WTC11 (cell line): ENCODE measurements at regions of chr4 and their contacts with region 1.

Region 1: GRCh38 chr4:33086331-33086925 is 2366.3 kb downstream of the PCDH7 start:
- DNase-seq: no peak
- ATAC-seq: no peak
- H3K4me3 Mint-ChIP-seq: no peak overlapping the region
- H3K27ac Mint-ChIP-seq: no peak overlapping the region
- H3K4me1 Mint-ChIP-seq: peaks cover 3% of the 10 kb centered on the region; the same call in 1 of the 2 replicates
- H3K27me3 Mint-ChIP-seq: no peaks in the 10 kb centered on the region
- CTCF ChIP-seq: no peak

Region 2: DNA sequence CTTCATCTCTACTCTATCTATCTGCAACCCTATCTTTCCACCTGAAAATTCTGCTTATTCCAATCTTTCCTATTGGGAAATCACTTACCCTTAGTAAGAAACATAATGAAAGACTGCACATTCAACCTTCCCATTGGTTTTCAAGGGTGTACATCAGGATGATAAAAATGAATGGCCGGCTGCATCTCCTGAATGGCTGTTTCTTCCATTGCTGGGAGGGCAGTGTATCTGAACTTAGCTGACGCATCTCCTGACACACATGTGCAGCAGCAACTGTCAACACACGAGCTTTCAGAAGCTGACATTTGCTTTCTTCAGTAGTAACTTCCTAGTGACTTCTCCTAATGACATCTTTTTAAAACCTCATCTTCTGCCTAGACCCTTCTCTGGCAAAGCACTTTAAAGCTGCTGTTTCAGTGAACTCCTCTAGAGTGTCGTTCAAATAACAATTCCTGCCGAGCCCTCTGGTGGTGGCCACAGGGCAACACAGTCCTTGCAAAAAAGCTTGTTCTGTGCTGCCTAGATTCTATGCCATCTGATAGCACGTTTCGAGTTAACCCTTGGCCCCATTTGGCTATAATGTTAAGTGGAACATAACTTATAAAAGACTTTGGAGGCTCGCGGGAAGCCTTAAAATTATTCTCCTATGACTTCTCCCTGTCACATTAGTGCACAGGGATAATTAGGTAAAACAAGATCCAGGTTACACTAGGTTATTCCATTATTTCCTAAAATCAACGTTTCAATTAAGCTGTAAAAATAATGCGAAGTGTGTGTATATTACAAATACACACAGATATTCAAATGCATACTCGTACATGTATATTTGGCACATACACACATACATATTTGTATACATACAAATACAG is 25.5 kb before region 1 on chr4:
- CTCF ChIA-PET with region 1: interaction called, 10 read pairs
- POLR2A ChIA-PET with region 1: no interaction called
- DNase-seq: peak; percentile 66
- ATAC-seq: peak; percentile 100
- H3K4me3 Mint-ChIP-seq: no peak overlapping the region
- H3K27ac Mint-ChIP-seq: no peak overlapping the region
- H3K4me1 Mint-ChIP-seq: peaks cover 16% of the 10 kb centered on the region
- H3K27me3 Mint-ChIP-seq: no peaks in the 10 kb centered on the region
- CTCF ChIP-seq: peak; percentile 74